HepG2 (cell line): ENCODE measurements at regions of chr17 and their contacts with region 1.

Region 1: GRCh38 chr17:48908047-48908843 is at the start of gene UBE2Z:
- DNase-seq: peak; percentile 95
- ATAC-seq: peak; percentile 92
- H3K4me3 ChIP-seq: peak within 1 kb of the TSS; percentile 82 to 97 (median 94)
- H3K27ac ChIP-seq: peak within 1 kb of the TSS; percentile 91
- H3K4me1 ChIP-seq: peaks cover 69% of the 10 kb centered on the region
- H3K27me3 ChIP-seq: no peaks in the 10 kb centered on the region; a peak in 1 of 5 replicates
- CTCF ChIP-seq: peak; percentile 80
- EP300 ChIP-seq: 0 out of 4 replicates have a peak, but pooled peaks of 1 of the 2 experiments have one; percentile 43
- POLR2A ChIP-seq: peak; percentile 90 to 92
- RAD21 ChIP-seq: peak; percentile 49; the same call in 1 of the 2 replicates
- total RNA-seq, gene UBE2Z: 63.2 and 72.7 TPM in 2 replicates

Region 2: GRCh38 chr17:48928876-48929811 is 20.9 kb after region 1 on chr17:
- CTCF ChIA-PET with region 1: no interaction called
- POLR2A ChIA-PET with region 1: interaction called, 19 read pairs
- in situ Hi-C with region 1: no loop called
- intact Hi-C with region 1: no loop called
- DNase-seq: no peak
- ATAC-seq: no peak; the same call in 2 of the 3 replicates
- H3K4me3 ChIP-seq: no peak overlapping the region
- H3K27ac ChIP-seq: no peak overlapping the region
- H3K4me1 ChIP-seq: peaks cover 21% of the 10 kb centered on the region
- H3K27me3 ChIP-seq: no peaks in the 10 kb centered on the region
- CTCF ChIP-seq: no peak
- EP300 ChIP-seq: no peak
- POLR2A ChIP-seq: peak; percentile 15 to 36; a peak in 2 of 4 replicates
- RAD21 ChIP-seq: no peak